HEK293T (cell line): ENCODE measurements at regions of chr19 and their contacts with region 1.

Region 1: GRCh38 chr19:46413262-46414031 is at the start of gene CCDC8:
- DNase-seq: peak; percentile 84

Region 2: DNA sequence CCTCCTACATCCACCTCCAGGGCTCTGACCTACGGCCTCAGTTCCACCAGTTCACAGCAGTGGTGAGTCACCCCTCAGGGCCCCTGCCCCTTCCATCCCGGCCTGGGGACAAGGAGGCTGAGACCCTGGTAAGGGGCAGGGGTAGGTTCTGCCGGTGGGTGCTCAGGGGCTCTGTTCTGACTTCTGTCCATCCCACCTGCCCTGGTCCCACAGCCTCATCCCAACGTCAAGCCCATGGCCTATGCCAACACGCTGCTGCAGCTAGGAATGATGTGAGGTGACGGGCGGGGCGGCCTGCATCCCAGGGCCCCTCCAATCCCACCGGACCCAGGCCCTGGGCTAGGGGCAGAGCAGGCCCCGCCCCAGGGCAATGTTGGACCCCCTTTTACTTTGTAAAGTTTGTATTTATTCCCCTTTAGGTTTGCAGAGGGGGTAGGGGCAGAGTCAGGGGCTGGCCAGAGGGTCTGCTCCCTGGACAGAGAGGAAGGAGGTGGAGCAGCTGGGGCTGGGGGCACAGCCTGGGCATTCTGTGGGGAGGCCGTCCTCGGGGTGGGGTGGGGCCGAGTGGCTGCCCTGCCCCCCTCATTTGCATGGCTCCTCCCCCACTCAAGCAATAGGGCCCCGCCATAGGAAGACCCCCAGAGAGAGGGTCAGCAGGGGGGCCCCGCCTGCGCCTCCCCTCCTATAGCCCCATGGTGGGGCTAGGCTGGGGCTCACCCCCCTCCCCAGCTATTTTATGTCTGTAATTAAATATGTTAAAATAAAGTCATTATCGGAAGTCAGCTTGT is 23.2 kb before region 1 on chr19:
- CTCF ChIA-PET with region 1: no interaction called
- POLR2A ChIA-PET with region 1: no interaction called
- DNase-seq: no peak

Region 3: GRCh38 chr19:46426506-46427162 is 13.2 kb after region 1 on chr19:
- CTCF ChIA-PET with region 1: no interaction called
- POLR2A ChIA-PET with region 1: interaction called, 15 read pairs
- DNase-seq: no peak